OCI-LY7 (cell line): ENCODE measurements at regions of chr12 and their contacts with region 1.

Region 1: DNA sequence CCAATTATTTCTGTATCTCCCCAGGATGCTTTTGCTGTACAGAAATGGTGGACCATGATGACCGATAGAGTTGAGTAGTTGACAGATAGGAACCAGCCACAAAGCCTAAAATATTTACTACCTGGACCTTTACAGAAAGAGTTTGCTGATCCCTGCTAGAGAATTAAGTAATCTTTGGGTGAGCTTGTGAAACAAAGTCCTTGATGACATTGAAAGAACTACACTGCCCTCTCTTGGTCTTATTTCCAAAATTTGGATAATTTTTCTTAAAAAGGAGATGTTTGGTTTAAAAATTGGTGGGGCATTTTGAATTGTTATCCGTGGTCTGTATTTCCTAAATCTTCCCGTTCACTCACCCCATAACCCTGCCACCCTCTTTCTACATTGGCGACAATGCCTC is 13.7 kb upstream of the TCTN1 start:
- DNase-seq: peak; percentile 70
- H3K4me3 ChIP-seq: no peak overlapping the region
- H3K27ac ChIP-seq: no peak overlapping the region
- H3K4me1 ChIP-seq: peaks cover 13% of the 10 kb centered on the region
- CTCF ChIP-seq: peak; percentile 84

Region 2: GRCh38 chr12:110100315-110100970 is 499.8 kb before region 1 on chr12:
- CTCF ChIA-PET with region 1: no interaction called
- POLR2A ChIA-PET with region 1: interaction called, 5 read pairs
- intact Hi-C with region 1: loop called (anchors 5 kb)
- DNase-seq: peak; percentile 87
- H3K4me3 ChIP-seq: peak overlapping the region; percentile 48
- H3K27ac ChIP-seq: peak overlapping the region; percentile 78
- H3K4me1 ChIP-seq: peaks cover 22% of the 10 kb centered on the region
- CTCF ChIP-seq: peak; percentile 97

Region 3: GRCh38 chr12:110371408-110372055 is 228.7 kb before region 1 on chr12:
- CTCF ChIA-PET with region 1: no interaction called
- POLR2A ChIA-PET with region 1: interaction called, 3 read pairs
- intact Hi-C with region 1: loop called (anchors 5 kb)
- DNase-seq: peak; percentile 89
- H3K4me3 ChIP-seq: peak overlapping the region; percentile 35
- H3K27ac ChIP-seq: peak overlapping the region; percentile 73
- H3K4me1 ChIP-seq: peaks cover 84% of the 10 kb centered on the region
- CTCF ChIP-seq: no peak

Region 4: DNA sequence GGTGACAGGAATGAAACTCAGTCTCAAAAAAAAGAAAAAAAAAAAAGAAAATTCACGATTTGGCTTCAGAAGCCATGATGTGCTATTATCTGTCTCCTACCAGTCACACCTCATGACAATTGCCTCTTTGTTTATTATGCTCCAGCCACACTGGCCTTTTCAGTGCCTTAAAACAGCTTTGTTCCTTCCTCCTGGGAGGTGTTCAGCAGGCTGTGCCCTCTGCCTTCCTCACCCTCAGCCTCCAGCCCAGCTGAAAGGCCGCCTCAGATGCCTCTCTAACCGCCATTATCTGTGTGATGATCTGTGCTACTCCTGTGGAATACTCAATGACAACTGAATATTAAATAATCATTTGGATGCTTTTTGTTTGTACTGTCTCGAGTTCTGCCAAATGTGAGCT is 141.5 kb before region 1 on chr12:
- CTCF ChIA-PET with region 1: no interaction called
- POLR2A ChIA-PET with region 1: interaction called, 8 read pairs
- intact Hi-C with region 1: loop called (anchors 2 kb)
- DNase-seq: no peak
- H3K4me3 ChIP-seq: no peak overlapping the region
- H3K27ac ChIP-seq: peak overlapping the region; percentile 94
- H3K4me1 ChIP-seq: peaks cover 44% of the 10 kb centered on the region
- CTCF ChIP-seq: no peak

Region 5: DNA sequence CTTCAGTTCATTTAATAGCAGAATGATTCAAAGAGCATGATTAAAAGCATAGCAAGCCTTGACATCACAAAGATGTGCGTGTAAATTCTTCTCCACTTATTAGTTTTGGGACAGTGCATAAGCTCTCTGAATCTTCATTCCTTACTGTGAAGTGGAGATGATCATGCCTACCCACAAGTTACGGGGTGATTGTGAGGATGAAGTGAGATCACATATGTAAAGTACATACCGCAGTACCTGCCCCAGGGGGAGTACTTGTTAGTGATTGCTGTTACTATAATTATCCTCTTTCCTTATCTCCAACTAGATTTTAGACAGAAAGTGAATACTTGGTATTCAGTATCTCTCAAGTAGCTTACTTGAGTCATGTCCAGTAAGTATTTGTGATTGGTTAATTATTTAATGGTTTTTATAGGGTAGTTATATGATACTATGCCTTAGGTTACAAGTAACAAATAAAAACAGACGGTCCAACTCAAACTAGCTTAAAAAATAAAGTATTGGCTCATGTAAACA is 92.1 kb before region 1 on chr12:
- CTCF ChIA-PET with region 1: interaction called, 4 read pairs
- POLR2A ChIA-PET with region 1: interaction called, 3 read pairs
- intact Hi-C with region 1: loop called (anchors 1 kb)
- DNase-seq: no peak
- H3K4me3 ChIP-seq: no peak overlapping the region
- H3K27ac ChIP-seq: no peak overlapping the region
- H3K4me1 ChIP-seq: no peaks in the 10 kb centered on the region
- CTCF ChIP-seq: no peak

Region 6: DNA sequence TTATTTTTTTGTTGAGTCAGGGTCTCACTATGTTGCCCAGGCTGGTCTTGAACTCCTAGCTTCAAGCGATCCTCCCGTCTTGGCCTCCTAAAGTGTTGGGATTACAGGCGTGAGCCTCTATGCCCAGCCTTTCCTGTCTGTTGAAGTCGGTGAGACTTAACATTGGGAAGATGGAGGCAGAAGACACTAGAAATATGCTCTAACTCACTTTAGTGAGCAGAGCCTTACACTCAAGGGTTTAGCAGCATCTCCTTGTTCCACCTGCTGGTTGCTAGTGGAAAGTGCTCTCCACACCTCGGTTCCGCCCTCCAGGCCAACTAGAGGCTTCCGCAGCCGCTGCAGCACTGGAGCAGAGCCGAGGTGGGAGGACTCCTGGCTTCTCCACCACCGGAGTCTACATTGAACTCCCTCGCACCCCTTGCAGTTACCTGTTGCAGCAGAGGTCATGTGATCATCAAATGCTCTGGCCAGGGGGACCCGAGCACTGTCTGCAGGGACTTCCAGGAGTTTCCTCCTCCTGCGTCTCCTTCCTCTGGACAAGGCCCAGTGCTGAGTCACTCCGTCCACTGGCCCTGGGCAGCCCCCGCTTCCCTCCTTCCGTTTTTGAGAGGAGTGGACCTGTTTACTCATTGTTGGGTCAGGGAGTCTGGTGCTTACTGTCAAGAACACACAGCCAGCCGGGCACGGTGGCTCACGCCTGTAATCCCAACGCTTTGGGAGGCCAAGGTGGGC is 98.1 kb after region 1 on chr12:
- CTCF ChIA-PET with region 1: no interaction called
- POLR2A ChIA-PET with region 1: interaction called, 3 read pairs
- intact Hi-C with region 1: loop called (anchors 1 kb)
- DNase-seq: peak; percentile 93
- H3K4me3 ChIP-seq: no peak overlapping the region
- H3K27ac ChIP-seq: no peak overlapping the region
- H3K4me1 ChIP-seq: peaks cover 22% of the 10 kb centered on the region
- CTCF ChIP-seq: peak; percentile 85